ENCODE measurements at regions of chr2 and their contacts with region 1.

Region 1: DNA sequence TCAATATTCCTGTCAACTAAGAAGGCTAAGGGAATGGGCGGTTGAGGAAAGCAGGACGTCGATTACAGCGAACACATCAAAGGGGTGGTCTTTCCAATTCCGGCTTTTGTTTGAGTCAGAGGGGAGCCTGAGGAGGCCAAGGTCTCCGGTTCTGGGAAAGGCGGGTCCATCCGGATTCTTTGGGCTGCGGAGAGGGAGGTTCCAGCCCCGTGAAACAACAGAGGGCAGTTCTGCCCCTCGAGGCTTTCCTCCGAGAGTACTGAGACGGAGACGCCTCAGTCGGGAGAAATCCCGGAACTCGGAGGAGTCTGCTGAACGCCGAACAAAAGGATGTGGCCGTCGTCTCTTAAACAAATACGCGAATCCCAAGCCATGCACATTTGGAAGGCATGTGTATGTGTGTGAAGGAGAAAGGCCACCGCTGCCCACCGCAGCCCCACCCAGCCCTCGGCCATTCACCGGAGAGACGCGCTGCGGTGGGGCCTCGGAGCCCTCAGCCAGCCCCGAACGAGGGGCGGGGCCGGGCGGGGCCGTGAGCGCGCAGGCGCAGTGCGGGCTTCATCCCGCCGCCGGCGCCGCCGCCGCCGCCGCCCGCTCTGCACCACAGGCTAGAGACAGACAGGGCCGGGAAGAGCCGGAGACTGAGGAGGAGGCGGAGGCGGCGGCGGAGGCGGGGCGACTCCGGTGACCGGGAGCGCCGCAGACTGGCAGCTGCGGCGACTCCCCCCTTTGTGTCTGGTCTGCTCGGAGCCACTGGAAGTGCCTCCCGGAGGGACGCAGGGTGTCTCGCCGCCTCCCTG is at the start of gene BMPR2:
- DNase-seq: peak; percentile 82
- H3K27ac ChIP-seq: peak within 1 kb of the TSS; percentile 98
- CTCF ChIP-seq: no peak

Region 2: DNA sequence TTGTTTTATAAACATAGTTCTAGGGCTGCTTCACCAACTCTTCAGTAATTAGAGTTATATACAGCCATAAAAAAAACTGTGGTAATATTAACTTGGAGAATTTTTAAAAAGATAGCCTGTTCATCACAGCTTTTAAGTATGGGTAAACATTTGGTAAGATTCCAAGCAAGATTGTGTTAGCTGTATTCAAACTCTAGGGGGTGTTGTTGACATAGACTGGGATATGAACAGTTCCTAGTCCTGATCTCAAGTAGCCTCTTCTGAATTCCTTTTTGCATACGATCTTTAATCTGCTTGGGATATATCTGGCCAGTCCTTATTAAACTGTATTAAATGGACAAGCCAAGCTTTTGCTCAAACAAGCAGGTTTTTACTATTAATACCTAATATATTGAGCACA is 96.9 kb before region 1 on chr2:
- CTCF ChIA-PET with region 1: interaction called, 10 read pairs
- POLR2A ChIA-PET with region 1: no interaction called
- DNase-seq: peak; percentile 17
- H3K27ac ChIP-seq: no peak overlapping the region
- CTCF ChIP-seq: peak; percentile 39

Region 3: GRCh38 chr2:202436626-202437025 is 60.8 kb after region 1 on chr2:
- CTCF ChIA-PET with region 1: no interaction called
- POLR2A ChIA-PET with region 1: interaction called, 10 read pairs
- DNase-seq: no peak
- H3K27ac ChIP-seq: no peak overlapping the region
- CTCF ChIP-seq: no peak

Measured in RWPE1 (cell line).